ENCODE measurements at regions of chr12 and their contacts with region 1.

Region 1: GRCh38 chr12:76031537-76032073 is at the start of gene PHLDA1:
- DNase-seq: peak; percentile 96
- ATAC-seq: peak; percentile 96
- total RNA-seq, gene PHLDA1: 4.0 TPM

Region 2: DNA sequence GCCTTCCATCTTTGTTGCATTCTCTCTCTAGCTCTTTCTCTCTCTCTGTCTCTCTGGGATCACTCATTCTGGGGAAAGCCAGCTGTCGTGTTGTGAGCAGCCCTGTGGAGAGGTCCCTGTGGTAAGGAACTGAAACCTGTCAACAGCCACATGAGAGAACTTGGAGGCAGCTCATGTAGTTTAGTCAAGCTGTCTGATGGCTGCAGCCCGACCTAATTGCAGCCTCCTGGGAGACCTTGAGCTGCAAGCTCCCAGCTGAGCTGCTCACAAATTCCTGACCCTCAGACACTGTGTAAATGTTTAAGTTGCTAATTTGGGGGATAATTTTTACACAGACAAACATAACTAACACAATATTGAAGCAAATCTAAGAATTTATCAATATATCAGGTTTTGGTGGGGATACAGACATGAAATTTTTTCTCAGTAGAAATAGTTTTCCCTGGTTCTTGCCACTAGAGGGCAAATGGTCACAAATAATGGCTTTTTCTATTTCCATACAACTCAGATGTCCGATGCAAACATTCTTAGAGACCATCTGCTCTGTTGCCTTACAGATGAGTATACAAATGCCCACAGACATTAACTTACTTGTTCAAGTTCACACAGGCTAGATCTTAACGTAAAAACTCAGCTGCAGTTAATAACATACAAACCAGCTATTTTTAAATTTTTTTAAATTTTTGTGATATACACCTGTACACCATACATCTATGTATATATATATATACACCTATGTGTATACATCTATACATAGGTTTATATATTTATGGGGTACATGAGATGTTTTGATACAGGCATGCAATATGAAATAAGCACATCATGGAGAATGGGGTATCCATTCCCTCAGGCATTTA is 504.7 kb before region 1 on chr12:
- intact Hi-C with region 1: loop called (anchors 5 kb)
- DNase-seq: no peak
- ATAC-seq: peak; percentile 34

Region 3: GRCh38 chr12:75623631-75624118 is 407.9 kb before region 1 on chr12:
- intact Hi-C with region 1: loop called (anchors 5 kb)
- DNase-seq: no peak
- ATAC-seq: peak; percentile 67

Region 4: GRCh38 chr12:75814851-75815754 is 216.5 kb before region 1 on chr12:
- intact Hi-C with region 1: loop called (anchors 5 kb)
- DNase-seq: no peak
- ATAC-seq: peak; percentile 86

Region 5: DNA sequence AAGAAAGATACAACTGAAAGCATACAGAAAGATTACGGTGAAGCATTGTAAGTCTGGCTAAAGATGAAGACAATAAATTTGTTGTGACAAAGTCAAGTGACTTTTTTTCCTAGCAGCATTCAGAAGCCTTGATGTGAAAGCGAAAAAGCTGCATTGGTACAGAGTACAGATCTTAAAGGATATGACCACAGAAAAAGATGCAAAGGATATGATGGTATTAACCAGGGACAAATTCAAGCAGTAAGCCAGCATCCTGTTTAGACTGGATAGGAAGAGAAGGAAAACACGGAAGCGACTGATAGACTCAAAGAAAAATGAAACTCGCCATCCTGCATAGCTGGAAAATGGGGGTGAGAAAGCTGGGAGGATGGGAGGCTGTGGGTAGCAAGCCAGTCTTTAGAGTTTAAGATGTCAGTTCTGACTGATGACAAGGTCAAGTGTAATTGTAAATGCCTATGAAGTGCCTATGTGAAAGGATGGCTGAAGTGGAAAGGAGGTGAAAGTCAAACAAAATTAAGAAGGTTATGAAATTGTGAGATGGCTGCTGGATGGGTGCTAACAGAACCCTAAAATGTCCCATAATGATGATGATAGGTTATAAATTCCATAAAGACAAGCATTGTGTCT is 92.5 kb before region 1 on chr12:
- intact Hi-C with region 1: loop called (anchors 5 kb)
- DNase-seq: no peak
- ATAC-seq: peak; percentile 56

Measured in Right ventricle myocardium inferior (tissue), 1 donor.